Common myeloid progenitor, CD34-positive (primary cell): ENCODE measurements at regions of chr15 and their contacts with region 1.

Region 1: DNA sequence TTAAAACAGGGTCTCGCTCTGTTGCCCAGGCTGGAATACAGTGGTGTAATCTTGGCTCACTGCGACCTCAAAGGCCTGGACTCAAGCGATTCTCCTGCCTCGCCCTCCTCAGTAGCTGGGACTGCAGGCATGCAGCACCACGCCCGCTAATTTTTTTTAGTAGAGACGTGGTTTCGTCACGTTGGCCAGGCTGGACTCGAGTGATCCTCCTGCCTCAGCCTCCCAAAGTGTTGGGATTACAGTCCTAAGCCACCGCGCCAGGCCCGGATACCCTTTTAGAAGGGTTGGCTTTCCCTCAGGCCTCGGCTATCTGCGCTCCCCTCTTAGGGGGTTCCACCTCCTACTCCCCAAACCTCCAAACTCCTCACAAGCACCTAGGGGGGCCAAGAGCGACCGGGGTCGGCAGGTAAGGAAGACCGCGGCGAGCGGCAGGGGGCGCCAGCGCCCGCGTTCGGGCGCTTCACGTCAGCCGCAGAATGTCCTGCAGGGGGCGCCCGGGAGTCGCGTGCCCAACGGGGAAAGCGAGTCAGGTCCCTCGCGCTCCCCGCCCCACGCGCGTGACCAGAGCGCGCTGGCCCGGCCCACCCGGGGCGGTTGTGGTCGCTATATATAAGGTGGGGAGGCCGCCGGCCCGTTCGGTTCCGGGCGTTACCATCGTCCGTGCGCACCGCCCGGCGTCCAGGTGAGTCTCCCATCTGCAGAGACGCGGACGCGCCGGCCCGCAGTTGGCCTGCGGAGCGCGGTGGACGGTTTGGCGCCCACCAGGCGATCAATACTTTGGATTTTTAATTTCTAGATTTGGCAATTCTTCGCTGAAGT is 51.8 kb upstream of the GATM start:
- DNase-seq: peak; percentile 71 to 75 (median 72)
- H3K4me3 ChIP-seq: peak overlapping the region in 6 of 7 experiments; percentile 40 to 71 (median 57)
- H3K27ac ChIP-seq: no peak overlapping the region
- H3K4me1 ChIP-seq: peaks cover 0 to 5% (median 2%) of the 10 kb centered on the region in 4 experiments
- H3K27me3 ChIP-seq: peaks cover 0 to 12% (median 3%) of the 10 kb centered on the region in 5 experiments

Region 2: DNA sequence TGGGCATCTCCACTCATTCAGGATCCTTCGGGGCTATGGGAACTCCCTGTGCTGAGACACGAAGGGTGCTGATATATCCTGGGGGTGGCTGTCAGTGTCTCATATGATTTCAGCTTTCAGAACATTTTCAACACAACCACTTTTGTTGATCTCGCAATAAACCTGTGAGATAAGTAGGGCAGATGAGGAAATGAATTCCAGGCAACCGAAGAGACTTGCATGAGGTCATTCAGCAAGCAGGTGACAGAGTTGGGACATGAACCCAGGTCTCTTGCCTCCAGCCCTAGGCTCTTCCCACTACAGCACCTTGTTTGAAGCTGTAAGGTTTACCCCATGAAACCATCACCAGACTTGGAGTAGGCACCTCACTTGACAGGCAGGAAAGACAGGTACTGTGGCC is 283.8 kb before region 1 on chr15:
- CTCF ChIA-PET with region 1: no interaction called
- POLR2A ChIA-PET with region 1: no interaction called
- DNase-seq: no peak
- H3K4me3 ChIP-seq: no peak overlapping the region
- H3K27ac ChIP-seq: no peak overlapping the region
- H3K4me1 ChIP-seq: peaks cover 0 to 6% (median 4%) of the 10 kb centered on the region in 4 experiments
- H3K27me3 ChIP-seq: peaks cover 0 to 5% (median 0%) of the 10 kb centered on the region in 5 experiments

Region 3: DNA sequence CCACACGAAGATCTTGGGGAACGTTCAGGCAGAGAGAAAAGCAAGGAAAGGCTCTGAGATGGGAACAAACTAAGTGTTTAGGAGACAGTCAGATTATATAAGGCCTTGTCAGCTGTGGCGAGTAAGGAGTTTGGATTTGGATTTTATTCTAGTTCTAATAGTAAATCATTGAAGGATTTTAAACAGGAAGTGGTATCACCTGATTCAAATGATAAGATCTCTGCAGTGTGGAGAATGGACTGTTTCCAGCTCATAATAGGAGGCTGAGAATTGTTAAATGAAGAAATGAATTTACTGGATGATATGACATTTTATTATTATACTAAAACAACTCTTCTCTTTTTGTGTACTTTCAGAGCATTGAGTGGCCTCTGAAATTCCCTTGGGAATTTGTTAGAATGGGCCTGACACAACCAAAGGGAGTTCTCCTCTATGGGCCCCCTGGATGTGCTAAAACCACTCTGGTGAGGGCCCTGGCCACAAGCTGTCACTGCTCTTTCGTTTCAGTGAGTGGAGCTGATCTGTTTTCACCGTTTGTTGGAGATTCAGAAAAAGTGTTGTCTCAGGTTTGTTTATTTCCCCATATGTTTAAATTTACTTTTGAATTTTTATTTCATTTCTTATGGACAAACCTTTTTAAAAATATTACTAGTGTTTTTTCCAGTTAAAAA is 15.8 kb before region 1 on chr15:
- CTCF ChIA-PET with region 1: interaction called, 14 read pairs
- POLR2A ChIA-PET with region 1: interaction called, 6 read pairs
- DNase-seq: peak in 2 of 3 donors; percentile 22 to 37
- H3K4me3 ChIP-seq: no peak overlapping the region
- H3K27ac ChIP-seq: no peak overlapping the region
- H3K4me1 ChIP-seq: peaks cover 0 to 13% (median 8%) of the 10 kb centered on the region in 4 experiments
- H3K27me3 ChIP-seq: no peaks in the 10 kb centered on the region

Region 4: GRCh38 chr15:45449916-45450867 is 20.0 kb after region 1 on chr15:
- CTCF ChIA-PET with region 1: interaction called, 123 read pairs
- POLR2A ChIA-PET with region 1: interaction called, 4 read pairs
- DNase-seq: no peak
- H3K4me3 ChIP-seq: no peak overlapping the region
- H3K27ac ChIP-seq: no peak overlapping the region
- H3K4me1 ChIP-seq: peaks cover 0 to 21% (median 19%) of the 10 kb centered on the region in 4 experiments
- H3K27me3 ChIP-seq: no peaks in the 10 kb centered on the region

Region 5: DNA sequence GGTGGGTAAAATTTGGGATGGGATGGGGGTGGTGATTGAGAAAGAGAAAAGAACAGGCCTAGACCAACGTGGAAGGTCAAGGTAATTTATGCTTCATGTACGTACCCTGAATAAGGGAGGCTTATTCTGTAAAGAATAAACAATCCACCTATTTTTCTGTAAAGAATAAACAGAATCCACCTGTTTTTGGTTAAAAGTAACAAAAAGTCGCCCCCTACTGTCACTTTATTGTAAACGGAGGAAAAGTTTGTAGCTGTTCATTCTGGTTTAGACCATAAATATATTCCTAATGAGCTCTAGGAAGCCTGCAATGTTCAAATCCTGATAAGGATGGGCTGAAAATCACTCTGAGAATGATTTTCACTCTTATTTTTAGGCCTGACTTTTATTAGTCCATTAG is 181.1 kb after region 1 on chr15:
- CTCF ChIA-PET with region 1: interaction called, 43 read pairs
- POLR2A ChIA-PET with region 1: no interaction called
- DNase-seq: peak in 2 of 3 donors; percentile 42 to 56
- H3K4me3 ChIP-seq: no peak overlapping the region
- H3K27ac ChIP-seq: no peak overlapping the region
- H3K4me1 ChIP-seq: no peaks in the 10 kb centered on the region
- H3K27me3 ChIP-seq: no peaks in the 10 kb centered on the region